Breast epithelium (tissue), 4 donors: ENCODE measurements at regions of chr5 and their contacts with region 1.

Region 1: DNA sequence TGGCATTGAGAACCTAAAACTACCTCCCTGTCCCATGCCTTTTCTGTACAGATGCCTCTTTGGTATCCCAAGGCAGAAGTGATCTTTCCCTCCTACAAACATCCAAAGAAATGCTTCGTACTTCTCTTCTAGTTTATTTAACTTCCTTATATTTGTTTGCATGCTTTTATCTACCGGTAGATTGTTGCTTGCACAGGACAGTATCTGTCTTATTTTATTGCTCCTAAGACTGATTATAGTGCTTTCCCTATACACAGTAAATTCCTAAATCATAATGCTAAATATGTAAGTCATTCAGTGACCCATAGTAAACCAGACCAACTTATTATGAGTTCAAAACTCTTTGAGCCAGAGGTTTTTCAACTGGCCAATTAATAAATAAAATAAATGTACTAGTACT is 156.9 kb downstream of the PRELID2 start:
- DNase-seq: no peak
- H3K4me3 ChIP-seq: no peak overlapping the region
- H3K27ac ChIP-seq: no peak overlapping the region
- H3K4me1 ChIP-seq: no peaks in the 10 kb centered on the region
- H3K27me3 ChIP-seq: no peaks in the 10 kb centered on the region
- CTCF ChIP-seq: no peak
- POLR2A ChIP-seq: no peak

Region 2: GRCh38 chr5:145362261-145362660 is 316.0 kb before region 1 on chr5:
- intact Hi-C with region 1: no loop called
- DNase-seq: no peak
- H3K4me3 ChIP-seq: no peak overlapping the region
- H3K27ac ChIP-seq: no peak overlapping the region
- H3K4me1 ChIP-seq: no peaks in the 10 kb centered on the region
- H3K27me3 ChIP-seq: no peaks in the 10 kb centered on the region
- CTCF ChIP-seq: no peak
- POLR2A ChIP-seq: no peak

Region 3: DNA sequence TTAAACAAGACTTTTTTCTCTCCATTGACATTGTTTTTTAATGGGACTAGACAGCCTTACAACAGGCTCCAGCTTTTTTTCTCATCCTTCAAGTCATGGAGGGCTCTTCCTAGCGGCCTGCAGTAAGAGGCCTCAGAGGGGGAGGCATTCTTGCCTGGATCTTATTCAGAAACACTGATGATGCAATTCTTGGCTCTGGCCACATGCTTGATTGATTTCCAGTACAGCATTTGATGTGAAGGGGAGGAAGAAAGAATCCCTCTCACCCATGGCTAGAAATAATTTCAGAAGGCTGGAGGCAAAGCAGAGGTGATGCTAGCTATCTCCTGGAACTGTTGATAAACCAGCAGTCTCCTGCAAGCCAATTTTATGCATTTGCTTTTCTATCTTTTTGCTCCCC is 167.9 kb before region 1 on chr5:
- intact Hi-C with region 1: loop called (anchors 10 kb)
- DNase-seq: no peak
- H3K4me3 ChIP-seq: no peak overlapping the region
- H3K27ac ChIP-seq: no peak overlapping the region
- H3K4me1 ChIP-seq: no peaks in the 10 kb centered on the region
- H3K27me3 ChIP-seq: no peaks in the 10 kb centered on the region
- CTCF ChIP-seq: no peak
- POLR2A ChIP-seq: no peak

Region 4: DNA sequence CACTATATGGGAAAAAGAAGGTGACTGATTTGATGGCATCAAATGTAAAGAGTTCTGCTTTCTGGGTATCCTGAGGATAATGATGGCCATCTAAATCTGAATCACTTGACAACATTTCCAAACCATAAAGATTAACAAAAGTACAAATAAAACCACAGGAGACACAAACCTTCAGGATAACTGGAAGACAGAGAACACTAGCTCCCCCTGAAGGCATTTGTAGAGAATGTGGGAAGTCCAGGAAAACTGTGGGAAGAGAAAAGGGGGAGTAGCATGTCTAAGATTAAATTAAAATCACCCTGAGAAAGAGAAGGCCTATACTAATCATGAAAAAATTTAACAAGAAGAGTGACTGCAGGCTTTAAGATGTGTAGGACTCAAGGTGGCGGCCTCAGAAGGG is 40.7 kb after region 1 on chr5:
- intact Hi-C with region 1: no loop called
- DNase-seq: no peak
- H3K4me3 ChIP-seq: no peak overlapping the region
- H3K27ac ChIP-seq: no peak overlapping the region
- H3K4me1 ChIP-seq: no peaks in the 10 kb centered on the region
- H3K27me3 ChIP-seq: no peaks in the 10 kb centered on the region
- CTCF ChIP-seq: no peak
- POLR2A ChIP-seq: no peak